Heart right ventricle (tissue), 16 donors: ENCODE measurements at regions of chr17 and their contacts with region 1.

Region 1: DNA sequence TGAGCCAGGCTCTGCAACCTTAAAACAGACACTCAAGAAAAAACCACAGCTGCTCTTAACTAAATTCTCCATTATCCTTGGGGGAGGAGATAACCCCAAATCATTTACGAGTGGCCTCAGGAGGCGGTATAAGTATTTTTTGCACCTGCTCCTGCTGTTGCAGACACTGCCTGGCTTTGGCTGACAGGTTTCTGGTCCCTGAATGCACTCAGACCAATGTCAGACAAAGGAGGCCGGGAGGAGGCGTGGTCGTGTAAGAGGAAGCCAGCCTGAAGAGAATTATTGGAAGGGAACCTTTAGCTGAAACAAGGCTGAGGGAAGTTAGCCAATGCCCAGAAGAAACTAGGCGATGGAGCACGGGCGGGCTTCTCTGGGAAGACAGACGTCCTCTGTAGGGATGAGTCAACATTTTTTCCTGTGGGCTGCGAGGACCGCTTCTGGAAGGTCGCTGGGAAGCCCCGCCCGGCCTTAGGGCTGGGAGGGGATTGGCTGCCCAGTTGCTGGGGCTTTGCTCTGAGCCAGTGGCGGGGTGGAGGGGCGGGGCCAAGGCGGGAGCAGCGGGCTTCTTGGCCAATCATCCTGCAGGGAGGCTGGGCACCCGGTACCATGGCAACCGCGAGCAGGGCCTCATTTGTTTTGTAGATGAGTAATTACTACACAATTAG is 82.3 kb downstream of the CCDC182 start:
- DNase-seq: peak; percentile 97 to 98
- ATAC-seq: peak; percentile 97 to 99 (median 98)
- H3K4me3 ChIP-seq: peak overlapping the region in 8 of 10 donors; percentile 2 to 58 (median 44)
- H3K27ac ChIP-seq: peak overlapping the region; percentile 44 to 93 (median 87)
- H3K4me1 ChIP-seq: peaks cover 5 to 61% (median 26%) of the 10 kb centered on the region in 9 donors
- H3K27me3 ChIP-seq: no peaks in the 10 kb centered on the region
- CTCF ChIP-seq: peak in 2 of 9 donors; percentile 23 to 25

Region 2: GRCh38 chr17:57370037-57370581 is 292.7 kb before region 1 on chr17:
- intact Hi-C with region 1: loop called in 1 of 10 experiments (anchors 10 kb)
- DNase-seq: no peak
- ATAC-seq: no peak
- H3K4me3 ChIP-seq: no peak overlapping the region
- H3K27ac ChIP-seq: peak overlapping the region; percentile 1 to 76 (median 38)
- H3K4me1 ChIP-seq: peaks cover 14 to 61% (median 47%) of the 10 kb centered on the region in 9 donors
- H3K27me3 ChIP-seq: no peaks in the 10 kb centered on the region
- CTCF ChIP-seq: no peak

Region 3: GRCh38 chr17:57440522-57441485 is 222.0 kb before region 1 on chr17:
- intact Hi-C with region 1: loop called in 1 of 10 experiments (anchors 10 kb)
- DNase-seq: peak; percentile 72 to 88
- ATAC-seq: peak; percentile 78 to 89 (median 84)
- H3K4me3 ChIP-seq: no peak overlapping the region
- H3K27ac ChIP-seq: peak overlapping the region; percentile 42 to 83 (median 67)
- H3K4me1 ChIP-seq: peaks cover 23 to 91% (median 61%) of the 10 kb centered on the region in 9 donors
- H3K27me3 ChIP-seq: no peaks in the 10 kb centered on the region
- CTCF ChIP-seq: peak in 8 of 9 donors; percentile 30 to 79 (median 64)

Region 4: GRCh38 chr17:57604771-57605674 is 57.8 kb before region 1 on chr17:
- intact Hi-C with region 1: loop called in 2 of 10 experiments (anchors 5 kb)
- DNase-seq: peak; percentile 50 to 73
- ATAC-seq: peak; percentile 73 to 88 (median 82)
- H3K4me3 ChIP-seq: peak overlapping the region in 5 of 10 donors; percentile 1 to 27 (median 25)
- H3K27ac ChIP-seq: peak overlapping the region; percentile 70 to 95 (median 87)
- H3K4me1 ChIP-seq: peaks cover 15 to 65% (median 50%) of the 10 kb centered on the region in 9 donors
- H3K27me3 ChIP-seq: no peaks in the 10 kb centered on the region
- CTCF ChIP-seq: peak in 1 of 9 donors; percentile 21

Region 5: GRCh38 chr17:57622683-57623433 is 39.9 kb before region 1 on chr17:
- intact Hi-C with region 1: loop called in 4 of 10 experiments (anchors 5 kb)
- DNase-seq: peak in 1 of 2 donors; percentile 47
- ATAC-seq: peak; percentile 52 to 83 (median 72)
- H3K4me3 ChIP-seq: peak overlapping the region in 1 of 10 donors; percentile 12
- H3K27ac ChIP-seq: peak overlapping the region in 9 of 10 donors; percentile 53 to 83 (median 59)
- H3K4me1 ChIP-seq: peaks cover 0 to 59% (median 33%) of the 10 kb centered on the region in 9 donors
- H3K27me3 ChIP-seq: no peaks in the 10 kb centered on the region
- CTCF ChIP-seq: no peak

Region 6: GRCh38 chr17:57629470-57629869 is 33.3 kb before region 1 on chr17:
- intact Hi-C with region 1: loop called in 4 of 10 experiments (anchors 5 kb)
- DNase-seq: no peak
- ATAC-seq: no peak
- H3K4me3 ChIP-seq: no peak overlapping the region
- H3K27ac ChIP-seq: no peak overlapping the region
- H3K4me1 ChIP-seq: peaks cover 0 to 33% (median 16%) of the 10 kb centered on the region in 9 donors
- H3K27me3 ChIP-seq: no peaks in the 10 kb centered on the region
- CTCF ChIP-seq: no peak

Region 7: DNA sequence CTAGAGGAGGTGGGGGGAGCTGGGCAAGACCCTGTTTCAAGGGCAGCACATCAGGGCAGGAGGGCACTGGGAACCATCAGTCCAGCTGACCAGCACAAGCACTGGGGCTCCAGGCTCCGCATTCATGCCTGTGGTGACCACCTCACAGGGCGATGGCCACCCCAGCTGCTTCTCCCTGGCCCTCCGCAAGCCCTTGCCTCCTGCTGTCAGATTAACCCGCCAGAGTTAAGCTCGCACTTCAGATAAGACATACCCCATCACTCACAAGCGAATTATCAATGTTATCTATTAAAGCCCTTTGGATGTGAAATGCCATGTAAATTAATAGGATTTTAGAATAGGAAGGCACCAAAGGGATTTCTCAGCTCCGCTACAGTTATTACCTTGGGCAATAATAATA is 22.7 kb before region 1 on chr17:
- intact Hi-C with region 1: no loop called
- DNase-seq: no peak
- ATAC-seq: no peak
- H3K4me3 ChIP-seq: no peak overlapping the region
- H3K27ac ChIP-seq: no peak overlapping the region
- H3K4me1 ChIP-seq: no peaks in the 10 kb centered on the region
- H3K27me3 ChIP-seq: no peaks in the 10 kb centered on the region
- CTCF ChIP-seq: no peak